ENCODE measurements at regions of chr4 and their contacts with region 1.

Region 1: DNA sequence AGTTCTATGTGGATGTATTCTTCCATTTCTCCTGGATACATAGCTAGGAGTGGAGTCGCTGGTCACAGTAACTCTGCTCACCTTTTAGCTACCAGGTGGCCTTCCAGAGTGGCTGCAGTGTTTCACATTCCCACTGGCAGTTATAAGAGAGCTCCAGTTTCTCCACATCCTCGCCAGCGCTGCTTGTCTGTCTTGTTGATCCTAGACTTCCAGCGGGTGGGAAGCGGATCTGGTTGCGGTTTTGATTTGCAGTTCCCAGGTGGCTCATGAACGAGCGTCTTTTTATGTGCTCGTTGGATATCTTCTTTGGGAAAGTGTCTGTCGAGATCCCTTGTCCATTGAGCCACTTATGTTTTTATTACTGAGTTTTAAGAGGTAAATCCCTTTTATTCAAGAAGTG is 11.6 kb downstream of the TACC3 start:
- DNase-seq: no peak
- H3K4me3 ChIP-seq: no peak overlapping the region
- H3K27ac ChIP-seq: no peak overlapping the region
- H3K4me1 ChIP-seq: no peaks in the 10 kb centered on the region
- H3K27me3 ChIP-seq: no peaks in the 10 kb centered on the region
- CTCF ChIP-seq: no peak
- EP300 ChIP-seq: no peak
- POLR2A ChIP-seq: no peak
- RAD21 ChIP-seq: no peak

Region 2: DNA sequence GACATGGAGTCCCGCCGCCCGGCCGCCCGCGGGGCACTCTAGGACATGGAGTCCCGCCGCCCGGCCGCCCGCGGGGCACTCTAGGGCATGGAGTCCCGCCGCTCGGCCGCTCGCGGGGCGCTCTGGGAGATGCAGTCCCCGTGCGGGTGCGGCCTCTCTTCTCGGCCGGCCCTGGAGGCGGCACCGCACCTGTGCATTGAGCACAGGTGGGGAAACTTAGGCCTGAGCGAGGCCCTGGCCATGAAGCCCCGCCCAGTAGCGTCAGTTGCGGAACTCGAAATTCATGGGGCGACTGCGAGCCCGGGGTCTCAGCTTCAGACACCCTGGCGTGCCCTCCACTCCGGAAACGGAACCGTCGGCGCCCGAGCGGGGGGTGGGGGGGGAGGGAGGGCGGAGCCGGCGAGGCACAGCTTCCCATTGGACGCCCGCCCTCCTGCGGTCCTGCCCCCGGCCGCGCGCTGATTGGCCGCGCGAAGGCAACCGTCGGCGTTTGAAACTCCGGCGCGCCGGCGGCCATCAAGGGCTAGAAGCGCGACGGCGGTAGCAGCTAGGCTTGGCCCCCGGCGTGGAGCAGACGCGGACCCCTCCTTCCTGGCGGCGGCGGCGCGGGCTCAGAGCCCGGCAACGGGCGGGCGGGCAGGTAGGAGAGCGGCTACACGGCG is 11.8 kb before region 1 on chr4 and contains the starts of genes TACC3 and TMEM129:
- CTCF ChIA-PET with region 1: interaction called, 20 read pairs
- POLR2A ChIA-PET with region 1: interaction called, 15 read pairs
- DNase-seq: peak; percentile 93
- H3K4me3 ChIP-seq: peak within 1 kb of the TSS; percentile 84 to 99 (median 96)
- H3K27ac ChIP-seq: peak within 1 kb of the TSS; percentile 69; the same call in 1 of the 2 replicates
- H3K4me1 ChIP-seq: peaks cover 0 to 19% (median 12%) of the 10 kb centered on the region in 4 experiments; a peak in 6 of 7 replicates
- H3K27me3 ChIP-seq: no peaks in the 10 kb centered on the region
- CTCF ChIP-seq: no peak
- EP300 ChIP-seq: peak in 1 of 2 experiments; percentile 12; a peak in 1 of 3 replicates
- POLR2A ChIP-seq: peak in 1 of 2 experiments; percentile 67; a peak in 1 of 3 replicates
- RAD21 ChIP-seq: no peak
- total RNA-seq, gene TACC3: 147 and 148 TPM in 2 replicates
- total RNA-seq, gene TMEM129: 28.5 and 31.5 TPM in 2 replicates

Measured in H1 (cell line).